ENCODE measurements at regions of chr17 and their contacts with region 1.

Region 1: GRCh38 chr17:29931231-29931932 is 1.4 kb upstream of the SSH2 start:
- DNase-seq: peak; percentile 80
- ATAC-seq: peak; percentile 66
- H3K4me3 Mint-ChIP-seq: no peak overlapping the region
- H3K27ac Mint-ChIP-seq: no peak overlapping the region
- H3K4me1 Mint-ChIP-seq: peaks cover 20% of the 10 kb centered on the region
- H3K27me3 Mint-ChIP-seq: no peaks in the 10 kb centered on the region

Region 2: GRCh38 chr17:29579866-29580771 is 351.3 kb before region 1 on chr17:
- CTCF ChIA-PET with region 1: interaction called, 3 read pairs
- POLR2A ChIA-PET with region 1: no interaction called
- intact Hi-C with region 1: loop called in 1 of 2 experiments (anchors 1 kb)
- DNase-seq: peak; percentile 96
- ATAC-seq: peak; percentile 97
- H3K4me3 Mint-ChIP-seq: no peak overlapping the region
- H3K27ac Mint-ChIP-seq: peak overlapping the region; percentile 72
- H3K4me1 Mint-ChIP-seq: peaks cover 18% of the 10 kb centered on the region
- H3K27me3 Mint-ChIP-seq: no peaks in the 10 kb centered on the region

Region 3: DNA sequence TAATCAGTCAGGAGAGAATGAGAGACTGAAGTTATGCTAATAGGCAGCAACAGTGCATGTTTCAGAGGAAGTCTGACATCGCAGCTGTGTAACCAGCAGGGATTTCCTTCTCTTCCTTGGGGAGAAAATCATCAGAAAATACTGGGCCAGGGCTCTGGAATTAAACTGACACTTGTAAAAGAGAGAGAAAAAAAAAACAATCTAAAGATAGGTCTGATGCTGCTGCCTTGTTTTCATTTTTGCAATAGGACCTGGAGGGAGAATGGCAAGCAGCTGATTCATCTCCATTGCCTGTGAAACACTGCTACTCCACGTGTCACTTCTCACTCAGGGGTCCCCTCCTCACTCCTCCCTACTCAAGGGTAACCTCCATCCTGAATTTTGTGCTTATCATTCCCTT is 291.0 kb before region 1 on chr17:
- CTCF ChIA-PET with region 1: interaction called, 16 read pairs
- POLR2A ChIA-PET with region 1: no interaction called
- intact Hi-C with region 1: loop called (anchors 1 to 2 kb)
- DNase-seq: no peak
- ATAC-seq: no peak
- H3K4me3 Mint-ChIP-seq: no peak overlapping the region
- H3K27ac Mint-ChIP-seq: peak overlapping the region; percentile 84
- H3K4me1 Mint-ChIP-seq: peaks cover 27% of the 10 kb centered on the region
- H3K27me3 Mint-ChIP-seq: no peaks in the 10 kb centered on the region

Region 4: GRCh38 chr17:29825604-29826003 is 105.8 kb before region 1 on chr17:
- CTCF ChIA-PET with region 1: interaction called, 12 read pairs
- POLR2A ChIA-PET with region 1: no interaction called
- intact Hi-C with region 1: loop called in 1 of 2 experiments (anchors 5 kb)
- DNase-seq: no peak
- ATAC-seq: no peak
- H3K4me3 Mint-ChIP-seq: no peak overlapping the region
- H3K27ac Mint-ChIP-seq: no peak overlapping the region
- H3K4me1 Mint-ChIP-seq: peaks cover 32% of the 10 kb centered on the region
- H3K27me3 Mint-ChIP-seq: no peaks in the 10 kb centered on the region

Region 5: DNA sequence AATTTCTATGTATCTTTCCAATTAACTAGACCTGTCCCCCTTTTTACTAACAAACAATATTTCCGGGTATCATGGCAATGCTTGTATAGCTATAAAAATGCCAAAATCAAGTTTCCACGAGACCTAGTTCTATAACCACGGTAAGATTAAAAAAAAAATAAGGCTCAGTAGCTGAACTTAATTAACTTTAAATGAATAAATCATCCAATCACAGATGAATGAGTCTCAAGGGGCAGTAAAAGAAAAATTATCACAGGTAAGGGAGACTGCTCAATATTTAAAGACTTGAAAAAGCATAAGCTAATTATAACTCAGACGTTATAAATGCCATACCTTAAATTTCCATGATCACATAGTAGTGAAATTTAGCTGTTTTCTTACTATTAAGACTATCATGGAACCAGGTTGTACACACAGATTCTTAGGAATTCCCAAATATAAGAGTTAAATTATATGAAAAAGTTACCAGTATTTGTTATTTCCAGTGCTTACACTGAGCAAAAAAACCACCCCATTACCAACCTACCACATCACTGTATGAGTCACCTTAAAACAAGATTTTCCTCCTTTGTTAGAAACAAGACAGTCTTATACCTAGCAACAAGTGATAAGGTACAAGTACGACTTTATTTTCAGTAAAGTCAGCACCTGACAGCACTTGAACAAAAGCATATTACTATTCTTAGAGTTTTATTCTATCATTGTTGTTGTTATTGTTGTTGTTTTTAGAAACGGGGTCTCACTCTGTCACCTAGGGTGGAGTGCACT is 22.0 kb before region 1 on chr17:
- CTCF ChIA-PET with region 1: interaction called, 13 read pairs
- POLR2A ChIA-PET with region 1: no interaction called
- intact Hi-C with region 1: no loop called
- DNase-seq: no peak
- ATAC-seq: peak; percentile 93
- H3K4me3 Mint-ChIP-seq: no peak overlapping the region
- H3K27ac Mint-ChIP-seq: peak overlapping the region; percentile 19
- H3K4me1 Mint-ChIP-seq: peaks cover 32% of the 10 kb centered on the region
- H3K27me3 Mint-ChIP-seq: no peaks in the 10 kb centered on the region

Region 6: DNA sequence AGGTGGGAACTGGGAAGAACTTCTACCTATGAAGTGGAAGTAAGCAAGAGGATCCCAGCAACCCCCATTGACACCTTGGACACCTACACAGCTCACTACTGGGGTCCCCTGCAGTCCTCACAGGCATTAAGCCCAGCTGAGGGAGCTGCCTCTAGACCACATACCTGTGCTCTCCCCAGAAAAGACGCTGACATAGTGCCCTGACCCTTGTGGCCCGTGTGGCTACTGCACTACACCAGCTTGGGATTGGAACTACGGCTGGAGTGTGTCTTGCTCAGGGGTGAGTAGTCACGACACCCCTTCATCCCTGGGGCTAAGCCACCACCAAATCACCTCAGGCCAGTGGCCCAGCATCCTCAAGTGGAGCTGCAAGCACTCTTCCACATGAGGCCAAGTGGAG is 131.0 kb after region 1 on chr17:
- CTCF ChIA-PET with region 1: no interaction called
- POLR2A ChIA-PET with region 1: no interaction called
- intact Hi-C with region 1: no loop called
- DNase-seq: no peak
- ATAC-seq: no peak
- H3K4me3 Mint-ChIP-seq: no peak overlapping the region
- H3K27ac Mint-ChIP-seq: no peak overlapping the region
- H3K4me1 Mint-ChIP-seq: no peaks in the 10 kb centered on the region
- H3K27me3 Mint-ChIP-seq: peaks cover 15% of the 10 kb centered on the region

Region 7: DNA sequence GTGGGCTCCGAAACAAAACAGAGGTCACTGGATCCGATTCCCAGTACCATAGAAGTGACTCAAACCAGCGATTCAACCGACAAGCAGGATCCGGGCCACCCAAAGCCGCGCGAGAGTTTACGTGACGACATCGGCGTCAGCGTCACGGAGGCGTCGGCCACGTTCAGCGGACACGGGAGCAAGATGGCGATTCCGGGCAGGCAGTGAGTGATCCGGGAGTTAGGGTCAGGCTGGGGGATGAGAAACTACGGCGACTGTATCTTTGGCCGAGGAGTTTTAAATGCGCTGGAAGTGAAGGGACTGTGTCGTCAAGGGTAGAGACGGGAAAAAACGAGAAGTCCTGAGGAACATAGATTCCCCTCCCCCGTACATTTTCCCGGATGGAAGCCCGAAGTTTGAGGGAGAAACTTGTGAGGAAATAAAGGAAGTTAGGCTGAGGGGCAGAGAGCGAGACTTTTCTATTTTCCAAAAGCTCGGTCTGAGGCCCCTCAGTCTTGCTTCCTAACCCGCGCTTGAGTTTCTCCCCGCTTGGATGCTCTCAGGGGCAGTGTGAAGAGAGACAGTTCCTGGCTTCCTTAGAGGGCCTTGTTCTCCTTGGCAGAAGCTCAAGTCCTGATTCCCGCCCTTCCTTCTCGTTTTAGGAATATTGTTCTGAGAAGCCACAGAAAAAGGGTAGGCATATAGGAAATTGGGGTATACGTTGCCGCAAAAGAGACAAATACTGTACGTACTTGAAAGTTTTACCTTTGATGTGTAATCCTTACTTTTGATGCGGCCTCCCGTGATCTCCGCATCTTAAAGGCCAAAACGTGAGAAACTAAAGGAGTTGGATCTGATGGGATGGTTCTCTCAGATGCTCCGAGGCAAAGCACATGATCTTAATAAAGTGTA is 185.5 kb after region 1 on chr17 and contains the start of gene NSRP1:
- CTCF ChIA-PET with region 1: no interaction called
- POLR2A ChIA-PET with region 1: no interaction called
- intact Hi-C with region 1: loop called in 1 of 2 experiments (anchors 1 kb)
- DNase-seq: peak; percentile 97
- ATAC-seq: peak; percentile 95
- H3K4me3 Mint-ChIP-seq: peak within 1 kb of the TSS; percentile 90
- H3K27ac Mint-ChIP-seq: peak within 1 kb of the TSS; percentile 98
- H3K4me1 Mint-ChIP-seq: peaks cover 41% of the 10 kb centered on the region
- H3K27me3 Mint-ChIP-seq: no peaks in the 10 kb centered on the region
- total RNA-seq, gene NSRP1: 29.9 to 43.0 TPM

Measured in activated CD4-positive, alpha-beta T cell treated with anti-CD3 and anti-CD28 coated beads for 36 hours (primary cell).